ENCODE measurements at regions of chr12 and their contacts with region 1.

Region 1: DNA sequence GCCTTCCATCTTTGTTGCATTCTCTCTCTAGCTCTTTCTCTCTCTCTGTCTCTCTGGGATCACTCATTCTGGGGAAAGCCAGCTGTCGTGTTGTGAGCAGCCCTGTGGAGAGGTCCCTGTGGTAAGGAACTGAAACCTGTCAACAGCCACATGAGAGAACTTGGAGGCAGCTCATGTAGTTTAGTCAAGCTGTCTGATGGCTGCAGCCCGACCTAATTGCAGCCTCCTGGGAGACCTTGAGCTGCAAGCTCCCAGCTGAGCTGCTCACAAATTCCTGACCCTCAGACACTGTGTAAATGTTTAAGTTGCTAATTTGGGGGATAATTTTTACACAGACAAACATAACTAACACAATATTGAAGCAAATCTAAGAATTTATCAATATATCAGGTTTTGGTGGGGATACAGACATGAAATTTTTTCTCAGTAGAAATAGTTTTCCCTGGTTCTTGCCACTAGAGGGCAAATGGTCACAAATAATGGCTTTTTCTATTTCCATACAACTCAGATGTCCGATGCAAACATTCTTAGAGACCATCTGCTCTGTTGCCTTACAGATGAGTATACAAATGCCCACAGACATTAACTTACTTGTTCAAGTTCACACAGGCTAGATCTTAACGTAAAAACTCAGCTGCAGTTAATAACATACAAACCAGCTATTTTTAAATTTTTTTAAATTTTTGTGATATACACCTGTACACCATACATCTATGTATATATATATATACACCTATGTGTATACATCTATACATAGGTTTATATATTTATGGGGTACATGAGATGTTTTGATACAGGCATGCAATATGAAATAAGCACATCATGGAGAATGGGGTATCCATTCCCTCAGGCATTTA is 15.5 kb upstream of the KRR1 start:
- DNase-seq: no peak
- ATAC-seq: peak in 3 of 4 donors; percentile 61 to 79 (median 75)
- H3K4me3 ChIP-seq: no peak overlapping the region
- H3K27ac ChIP-seq: no peak overlapping the region
- H3K4me1 ChIP-seq: no peaks in the 10 kb centered on the region
- H3K27me3 ChIP-seq: no peaks in the 10 kb centered on the region
- CTCF ChIP-seq: peak; percentile 26 to 66 (median 47)

Region 2: GRCh38 chr12:75571204-75571603 is 44.3 kb after region 1 on chr12:
- intact Hi-C with region 1: no loop called
- DNase-seq: no peak
- ATAC-seq: no peak
- H3K4me3 ChIP-seq: no peak overlapping the region
- H3K27ac ChIP-seq: peak overlapping the region in 1 of 4 donors; percentile 6
- H3K4me1 ChIP-seq: no peaks in the 10 kb centered on the region
- H3K27me3 ChIP-seq: no peaks in the 10 kb centered on the region
- CTCF ChIP-seq: no peak

Region 3: GRCh38 chr12:76031537-76032073 is 504.7 kb after region 1 on chr12 and contains the start of gene PHLDA1:
- intact Hi-C with region 1: loop called in 2 of 3 experiments (anchors 10 kb)
- DNase-seq: peak; percentile 93 to 97 (median 96)
- ATAC-seq: peak; percentile 83 to 91 (median 88)
- H3K4me3 ChIP-seq: peak within 1 kb of the TSS; percentile 68 to 83 (median 72)
- H3K27ac ChIP-seq: peak within 1 kb of the TSS; percentile 88 to 98 (median 96)
- H3K4me1 ChIP-seq: peaks cover 0 to 17% (median 6%) of the 10 kb centered on the region in 3 donors
- H3K27me3 ChIP-seq: no peaks in the 10 kb centered on the region
- CTCF ChIP-seq: peak; percentile 25 to 54 (median 30)
- total RNA-seq, gene PHLDA1: 2.9 to 16.1 (median 7.1) TPM

Region 4: DNA sequence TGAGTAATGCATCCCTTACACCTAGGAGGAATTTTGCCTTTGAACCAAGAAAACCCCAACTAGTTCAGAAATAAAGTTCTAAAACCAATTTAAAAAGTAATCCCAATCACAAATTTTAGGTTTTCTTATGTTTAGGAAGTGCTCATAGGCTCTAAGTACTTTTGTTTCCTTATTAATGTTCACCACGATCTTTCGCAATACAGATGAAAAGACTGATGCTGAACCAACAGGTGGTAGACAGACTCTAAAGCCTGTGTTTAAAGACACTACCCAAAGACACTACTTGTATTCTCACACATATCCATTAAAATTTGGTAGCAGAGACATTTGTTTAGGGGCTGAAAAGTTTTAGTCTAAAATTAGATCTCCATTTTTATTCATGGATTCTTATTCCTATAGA is 515.3 kb after region 1 on chr12:
- intact Hi-C with region 1: loop called (anchors 5 to 10 kb)
- DNase-seq: no peak
- ATAC-seq: no peak
- H3K4me3 ChIP-seq: no peak overlapping the region
- H3K27ac ChIP-seq: no peak overlapping the region
- H3K4me1 ChIP-seq: no peaks in the 10 kb centered on the region
- H3K27me3 ChIP-seq: no peaks in the 10 kb centered on the region
- CTCF ChIP-seq: no peak

Measured in pancreas (tissue), 10 donors.